AG04449 (cell line): ENCODE measurements at regions of chr1 and their contacts with region 1.

Region 1: GRCh38 chr1:12658531-12659453 is 14.9 kb downstream of the AADACL4 start:
- DNase-seq: no peak
- H3K4me3 ChIP-seq: no peak overlapping the region
- CTCF ChIP-seq: peak; percentile 75

Region 2: DNA sequence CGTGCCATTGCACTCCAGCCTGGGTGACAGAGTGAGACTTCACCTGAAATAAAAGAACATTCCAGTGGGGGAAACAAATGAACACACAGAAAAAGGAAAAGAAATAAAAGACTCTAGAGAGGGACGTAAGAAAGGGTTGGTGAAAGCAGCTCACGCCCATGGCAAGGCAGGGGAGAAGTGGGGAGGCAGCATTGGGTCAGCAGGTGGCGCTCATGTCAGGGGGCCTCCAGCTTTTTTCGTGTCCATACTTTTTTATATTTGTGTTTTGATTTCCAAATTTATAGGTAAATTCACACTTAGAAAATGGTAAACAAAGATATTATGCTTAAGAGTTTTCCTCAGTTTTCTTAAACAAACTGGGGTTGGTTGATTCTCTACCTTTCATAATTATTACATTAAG is 383.4 kb before region 1 on chr1:
- CTCF ChIA-PET with region 1: interaction called, 116 read pairs
- POLR2A ChIA-PET with region 1: no interaction called
- DNase-seq: no peak
- H3K4me3 ChIP-seq: no peak overlapping the region
- CTCF ChIP-seq: peak; percentile 78

Region 3: GRCh38 chr1:12314333-12314903 is 344.4 kb before region 1 on chr1:
- CTCF ChIA-PET with region 1: interaction called, 209 read pairs
- POLR2A ChIA-PET with region 1: no interaction called
- DNase-seq: no peak
- H3K4me3 ChIP-seq: no peak overlapping the region
- CTCF ChIP-seq: no peak

Region 4: DNA sequence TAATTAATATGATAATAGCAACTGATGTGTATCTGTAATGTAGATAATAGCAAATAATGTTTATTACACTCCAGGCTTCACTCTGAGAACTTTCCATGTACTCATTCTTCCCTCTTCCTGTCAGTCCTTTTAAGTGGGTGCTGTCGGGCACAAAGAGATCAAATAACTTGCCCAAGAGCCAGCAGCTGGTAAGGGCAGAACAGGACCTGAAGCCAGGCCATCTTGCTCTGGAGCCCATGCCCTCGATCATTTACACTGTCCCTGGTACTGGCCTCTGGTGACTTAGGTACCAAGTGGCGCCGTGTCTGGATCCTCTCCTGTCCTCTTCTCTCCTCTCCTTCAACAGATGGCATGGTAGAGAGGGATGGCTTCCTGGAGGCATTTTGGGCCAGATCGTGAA is 331.8 kb before region 1 on chr1:
- CTCF ChIA-PET with region 1: interaction called, 13 read pairs
- POLR2A ChIA-PET with region 1: no interaction called
- DNase-seq: no peak
- H3K4me3 ChIP-seq: no peak overlapping the region
- CTCF ChIP-seq: no peak

Region 5: DNA sequence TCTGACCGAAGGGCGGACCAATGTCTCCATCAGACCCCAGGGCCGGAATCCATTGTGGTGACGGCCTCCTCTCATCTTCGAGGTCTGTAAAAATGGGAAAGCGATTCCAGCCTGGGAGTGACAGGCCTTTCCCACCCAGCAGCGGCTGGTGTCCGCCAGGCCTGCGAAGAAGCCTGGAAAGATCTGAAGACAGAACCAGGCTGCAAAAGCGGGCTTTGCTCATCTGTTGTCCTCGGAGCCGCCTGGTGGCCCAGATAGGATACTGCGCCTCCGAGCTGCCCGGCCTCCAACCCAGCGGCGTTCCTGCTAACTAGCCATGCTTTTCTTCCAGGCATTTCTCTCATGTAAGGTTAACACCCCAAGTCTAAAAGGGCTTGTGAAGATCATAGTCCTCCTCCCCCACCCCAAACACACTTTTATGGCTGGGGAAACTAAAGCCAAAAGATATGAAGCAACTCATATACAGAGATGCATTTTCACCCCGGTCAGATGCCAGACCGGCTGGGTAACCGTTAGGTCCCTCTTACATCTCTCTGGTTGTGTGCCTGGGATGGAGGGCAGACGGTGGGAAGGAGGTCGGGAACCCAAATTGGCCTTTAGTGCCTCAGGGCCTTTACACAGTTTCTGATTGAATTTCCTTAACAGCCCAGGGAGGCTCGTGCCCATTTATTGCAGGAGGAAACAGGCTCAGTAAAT is 38.9 kb before region 1 on chr1:
- CTCF ChIA-PET with region 1: interaction called, 13 read pairs
- POLR2A ChIA-PET with region 1: no interaction called
- DNase-seq: no peak
- H3K4me3 ChIP-seq: peak overlapping the region; percentile 82
- CTCF ChIP-seq: peak; percentile 93

Region 6: GRCh38 chr1:12669529-12670068 is 10.8 kb after region 1 on chr1:
- CTCF ChIA-PET with region 1: interaction called, 17 read pairs
- POLR2A ChIA-PET with region 1: no interaction called
- DNase-seq: no peak
- H3K4me3 ChIP-seq: no peak overlapping the region
- CTCF ChIP-seq: no peak